ENCODE measurements at regions of chr3 and their contacts with region 1.

Region 1: DNA sequence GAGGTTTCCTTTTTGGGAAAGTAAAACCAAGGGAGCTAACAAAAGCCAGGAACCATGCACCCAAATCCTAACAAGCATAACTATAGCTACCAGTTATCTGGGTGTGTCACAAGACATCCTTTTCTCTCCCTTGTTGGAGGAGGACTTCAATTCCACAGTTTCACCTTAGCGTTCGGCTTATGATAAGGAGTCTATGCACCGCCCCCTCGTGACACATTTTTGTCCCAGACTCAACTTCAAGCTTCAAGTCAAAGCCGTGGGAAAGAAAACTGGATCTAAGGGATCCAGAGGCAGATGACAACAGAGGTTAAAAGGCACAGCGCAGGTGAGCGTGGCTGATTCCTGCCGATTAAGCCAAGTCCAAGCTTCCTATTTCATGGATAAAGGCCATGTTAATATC is 13.9 kb upstream of the FXR1 start:
- DNase-seq: no peak
- H3K4me3 ChIP-seq: no peak overlapping the region
- H3K27ac ChIP-seq: no peak overlapping the region
- H3K4me1 ChIP-seq: no peaks in the 10 kb centered on the region
- H3K27me3 ChIP-seq: no peaks in the 10 kb centered on the region
- CTCF ChIP-seq: no peak

Region 2: DNA sequence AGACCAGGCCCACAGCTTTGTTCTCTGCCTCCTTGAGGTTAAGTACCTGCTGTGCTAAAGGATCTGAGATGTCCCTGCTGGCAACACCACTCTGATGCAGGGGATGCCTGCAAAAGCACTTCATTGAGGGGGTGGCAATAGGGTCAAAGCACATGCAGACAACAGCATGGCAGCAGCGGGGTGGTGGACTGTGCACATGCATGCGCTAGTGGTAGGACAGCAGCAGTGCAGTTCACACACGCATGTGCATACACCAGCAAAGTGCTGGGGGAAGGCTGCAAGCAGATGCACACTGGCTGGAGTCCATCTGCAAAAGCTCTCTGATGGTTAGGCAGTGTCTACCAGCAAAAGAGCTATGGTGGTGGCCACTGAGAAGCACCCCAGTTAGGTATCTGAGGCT is 117.4 kb before region 1 on chr3:
- CTCF ChIA-PET with region 1: no interaction called
- dilution Hi-C with region 1: no loop called
- in situ Hi-C with region 1: no loop called
- intact Hi-C with region 1: no loop called
- DNase-seq: no peak
- H3K4me3 ChIP-seq: no peak overlapping the region
- H3K27ac ChIP-seq: no peak overlapping the region
- H3K4me1 ChIP-seq: no peaks in the 10 kb centered on the region
- H3K27me3 ChIP-seq: peaks cover 2% of the 10 kb centered on the region
- CTCF ChIP-seq: no peak

Region 3: DNA sequence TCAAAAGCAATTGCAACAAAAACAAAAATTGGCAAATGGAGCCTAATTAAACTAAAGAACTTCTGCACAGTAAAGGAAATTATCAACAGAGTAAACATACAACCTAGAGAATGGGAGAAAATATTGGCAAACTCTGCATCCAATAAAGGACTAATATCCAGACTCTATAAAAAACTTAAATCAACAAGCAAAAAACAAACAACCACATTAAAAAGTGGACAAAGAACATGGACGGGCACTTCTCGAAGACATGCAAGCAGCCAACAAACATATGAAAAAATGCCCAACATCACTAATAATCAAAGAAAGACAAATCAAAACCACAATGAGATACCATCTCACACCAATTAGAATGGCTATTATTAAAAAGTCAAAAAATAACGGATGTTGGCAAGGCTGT is 61.3 kb before region 1 on chr3:
- CTCF ChIA-PET with region 1: no interaction called
- dilution Hi-C with region 1: loop called (anchors 10 kb)
- in situ Hi-C with region 1: no loop called
- intact Hi-C with region 1: no loop called
- DNase-seq: no peak
- H3K4me3 ChIP-seq: no peak overlapping the region
- H3K27ac ChIP-seq: no peak overlapping the region
- H3K4me1 ChIP-seq: no peaks in the 10 kb centered on the region
- H3K27me3 ChIP-seq: peaks cover 2% of the 10 kb centered on the region
- CTCF ChIP-seq: no peak

Region 4: GRCh38 chr3:180947761-180948633 is 49.4 kb after region 1 on chr3:
- CTCF ChIA-PET with region 1: no interaction called
- dilution Hi-C with region 1: no loop called
- in situ Hi-C with region 1: no loop called
- intact Hi-C with region 1: no loop called
- DNase-seq: no peak
- H3K4me3 ChIP-seq: no peak overlapping the region
- H3K27ac ChIP-seq: no peak overlapping the region
- H3K4me1 ChIP-seq: no peaks in the 10 kb centered on the region
- H3K27me3 ChIP-seq: no peaks in the 10 kb centered on the region
- CTCF ChIP-seq: no peak

Region 5: DNA sequence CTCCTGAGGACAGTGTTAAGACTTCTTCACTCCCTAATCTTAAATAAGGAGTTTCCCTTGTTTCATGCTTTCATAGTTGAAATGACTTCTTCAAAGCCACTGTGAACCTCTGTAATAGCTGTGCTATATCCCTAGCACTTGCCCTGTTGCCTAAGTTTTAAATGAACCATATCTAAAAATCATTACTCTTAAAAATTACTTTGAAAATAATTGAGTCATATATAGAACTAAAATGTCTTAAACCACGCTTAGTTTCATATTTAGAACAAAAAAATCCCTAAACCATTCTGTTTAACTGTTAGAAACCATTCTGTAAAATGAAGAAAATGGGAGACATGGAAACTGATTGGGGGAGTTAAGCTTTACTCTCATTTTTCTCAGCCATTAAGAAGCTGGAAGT is 61.1 kb after region 1 on chr3:
- CTCF ChIA-PET with region 1: no interaction called
- dilution Hi-C with region 1: no loop called
- in situ Hi-C with region 1: no loop called
- intact Hi-C with region 1: no loop called
- DNase-seq: no peak
- H3K4me3 ChIP-seq: no peak overlapping the region
- H3K27ac ChIP-seq: no peak overlapping the region
- H3K4me1 ChIP-seq: no peaks in the 10 kb centered on the region
- H3K27me3 ChIP-seq: no peaks in the 10 kb centered on the region
- CTCF ChIP-seq: no peak

Region 6: GRCh38 chr3:181009225-181009624 is 110.7 kb after region 1 on chr3:
- CTCF ChIA-PET with region 1: no interaction called
- dilution Hi-C with region 1: loop called (anchors 5 kb)
- in situ Hi-C with region 1: no loop called
- intact Hi-C with region 1: no loop called
- DNase-seq: no peak
- H3K4me3 ChIP-seq: no peak overlapping the region
- H3K27ac ChIP-seq: no peak overlapping the region
- H3K4me1 ChIP-seq: no peaks in the 10 kb centered on the region
- H3K27me3 ChIP-seq: no peaks in the 10 kb centered on the region
- CTCF ChIP-seq: no peak

Measured in mammary epithelial cell (primary cell).